ENCODE measurements at regions of chr4 and their contacts with region 1.

Region 1: DNA sequence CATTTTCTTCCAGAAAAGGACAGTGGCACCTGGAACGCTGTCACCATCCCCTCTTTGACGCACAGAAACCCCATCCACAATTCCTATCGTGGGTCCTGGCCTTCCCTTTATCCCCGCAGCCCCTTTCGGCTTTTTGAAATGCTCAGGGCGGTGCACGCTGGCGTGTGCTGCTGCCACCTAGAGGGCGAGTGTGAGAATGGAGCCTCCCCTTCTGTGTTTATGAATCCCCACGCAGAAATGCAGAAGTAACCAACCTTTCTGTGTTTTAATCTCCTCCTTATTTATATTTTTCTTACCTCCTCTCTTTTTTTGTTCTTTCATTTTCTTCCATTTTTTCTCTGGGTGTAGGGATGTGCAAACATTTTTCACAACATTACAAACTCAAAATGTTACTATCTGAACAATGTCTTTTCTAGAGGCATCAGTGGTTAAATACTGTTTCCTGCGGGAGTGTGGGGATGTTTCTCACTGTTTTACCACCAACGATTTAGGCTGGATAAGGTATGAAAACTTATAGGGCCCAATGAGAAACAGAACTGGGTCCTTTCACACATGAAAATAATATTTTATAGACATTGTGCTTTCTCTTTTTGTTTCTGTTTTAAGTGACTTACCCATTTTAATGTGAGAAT is 50.0 kb downstream of the TMA16 start:
- DNase-seq: peak; percentile 59
- ATAC-seq: peak; percentile 93
- H3K4me3 Mint-ChIP-seq: no peak overlapping the region
- H3K27ac Mint-ChIP-seq: no peak overlapping the region
- H3K4me1 Mint-ChIP-seq: peaks cover 30% of the 10 kb centered on the region
- H3K27me3 Mint-ChIP-seq: no peaks in the 10 kb centered on the region
- CTCF ChIP-seq: peak; percentile 58

Region 2: DNA sequence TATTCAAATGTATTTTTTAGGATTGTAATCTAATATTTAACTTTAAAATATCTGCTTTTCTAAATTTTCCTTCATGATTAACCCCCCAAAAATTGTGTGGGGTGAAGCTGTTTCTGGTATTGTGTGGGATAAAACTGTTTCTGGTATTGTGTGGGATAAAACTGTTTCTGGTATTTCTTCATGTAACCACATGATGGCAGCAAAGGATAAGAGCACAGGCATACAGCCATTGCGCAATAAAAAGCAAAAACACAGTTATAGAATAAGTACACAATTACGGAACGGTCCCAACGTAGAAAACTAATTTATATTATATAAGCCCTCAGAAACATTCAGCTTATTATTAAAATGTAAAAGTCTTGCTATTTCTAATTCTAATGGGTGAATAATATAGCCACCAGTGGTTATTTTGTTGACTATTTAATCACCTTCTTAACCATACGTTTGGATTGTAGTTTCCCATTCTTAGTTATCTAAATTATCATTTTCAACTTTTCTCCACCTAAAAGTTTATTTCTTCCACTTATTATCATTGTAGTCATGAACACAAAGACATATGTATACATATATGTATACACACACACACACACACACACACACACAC is 1046.9 kb before region 1 on chr4:
- CTCF ChIA-PET with region 1: interaction called, 5 read pairs
- POLR2A ChIA-PET with region 1: interaction called, 4 read pairs
- intact Hi-C with region 1: loop called (anchors 1 kb)
- DNase-seq: no peak
- ATAC-seq: peak; percentile 50
- H3K4me3 Mint-ChIP-seq: no peak overlapping the region
- H3K27ac Mint-ChIP-seq: no peak overlapping the region
- H3K4me1 Mint-ChIP-seq: no peaks in the 10 kb centered on the region
- H3K27me3 Mint-ChIP-seq: no peaks in the 10 kb centered on the region
- CTCF ChIP-seq: no peak

Region 3: GRCh38 chr4:163166041-163166579 is 378.4 kb before region 1 on chr4:
- CTCF ChIA-PET with region 1: no interaction called
- POLR2A ChIA-PET with region 1: no interaction called
- intact Hi-C with region 1: loop called (anchors 2 kb)
- DNase-seq: peak; percentile 63
- ATAC-seq: peak; percentile 64
- H3K4me3 Mint-ChIP-seq: peak overlapping the region; percentile 91
- H3K27ac Mint-ChIP-seq: peak overlapping the region; percentile 95
- H3K4me1 Mint-ChIP-seq: peaks cover 27% of the 10 kb centered on the region
- H3K27me3 Mint-ChIP-seq: no peaks in the 10 kb centered on the region
- CTCF ChIP-seq: no peak

Region 4: GRCh38 chr4:163180090-163180489 is 364.4 kb before region 1 on chr4:
- CTCF ChIA-PET with region 1: no interaction called
- POLR2A ChIA-PET with region 1: no interaction called
- intact Hi-C with region 1: no loop called
- DNase-seq: no peak
- ATAC-seq: no peak
- H3K4me3 Mint-ChIP-seq: no peak overlapping the region
- H3K27ac Mint-ChIP-seq: no peak overlapping the region
- H3K4me1 Mint-ChIP-seq: no peaks in the 10 kb centered on the region
- H3K27me3 Mint-ChIP-seq: peaks cover 16% of the 10 kb centered on the region
- CTCF ChIP-seq: no peak

Region 5: GRCh38 chr4:163269869-163270268 is 274.7 kb before region 1 on chr4:
- CTCF ChIA-PET with region 1: no interaction called
- POLR2A ChIA-PET with region 1: no interaction called
- intact Hi-C with region 1: no loop called
- DNase-seq: no peak
- ATAC-seq: no peak
- H3K4me3 Mint-ChIP-seq: no peak overlapping the region
- H3K27ac Mint-ChIP-seq: no peak overlapping the region
- H3K4me1 Mint-ChIP-seq: no peaks in the 10 kb centered on the region
- H3K27me3 Mint-ChIP-seq: peaks cover 4% of the 10 kb centered on the region
- CTCF ChIP-seq: no peak

Region 6: DNA sequence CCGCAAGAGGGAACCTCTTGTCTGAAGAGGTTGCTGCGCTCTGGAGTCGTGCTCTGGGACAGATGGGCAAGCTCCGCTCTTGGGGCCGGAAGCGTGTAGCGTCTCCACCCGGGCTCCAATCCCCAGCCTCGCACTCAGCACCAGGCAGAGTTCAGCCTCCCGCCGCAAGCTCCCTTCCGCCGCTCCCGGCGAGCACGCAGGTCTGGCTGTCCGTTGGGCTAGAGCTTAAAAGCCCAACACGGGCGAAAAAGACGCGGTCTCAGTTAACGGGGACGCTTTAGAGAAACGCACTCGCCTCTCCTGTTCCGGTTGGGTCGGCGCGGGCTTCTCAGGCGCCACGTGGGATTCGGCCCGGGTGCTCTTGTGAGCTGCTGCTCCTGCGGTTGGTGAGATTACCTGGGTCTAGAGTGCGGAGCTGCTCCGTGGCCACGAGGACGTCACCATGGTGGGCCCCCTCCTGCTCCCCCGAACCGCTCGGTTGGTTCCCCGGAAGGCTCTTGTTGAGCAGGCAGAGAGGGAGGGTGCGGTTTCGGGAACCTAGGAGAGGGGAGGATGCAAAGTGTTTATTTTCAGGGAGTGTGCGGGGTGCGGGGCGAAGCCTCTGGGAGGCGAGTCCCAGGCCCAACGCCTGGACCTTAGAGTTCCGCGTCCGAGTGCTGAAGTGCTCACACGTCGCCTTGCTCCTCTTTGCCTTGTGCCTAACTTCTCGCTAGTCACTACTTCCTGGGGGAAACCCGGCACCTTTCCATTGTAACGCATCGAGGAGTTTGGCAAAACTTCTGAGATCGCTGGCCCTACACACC is 50.0 kb before region 1 on chr4 and contains the start of gene TMA16:
- CTCF ChIA-PET with region 1: interaction called, 24 read pairs
- POLR2A ChIA-PET with region 1: interaction called, 51 read pairs
- intact Hi-C with region 1: loop called (anchors 2 kb)
- DNase-seq: peak; percentile 75
- ATAC-seq: peak; percentile 66
- H3K4me3 Mint-ChIP-seq: peak within 1 kb of the TSS; percentile 99
- H3K27ac Mint-ChIP-seq: peak within 1 kb of the TSS; percentile 99
- H3K4me1 Mint-ChIP-seq: peaks cover 43% of the 10 kb centered on the region
- H3K27me3 Mint-ChIP-seq: no peaks in the 10 kb centered on the region
- CTCF ChIP-seq: no peak
- total RNA-seq, gene TMA16: 52.5 and 54.1 TPM in 2 replicates

Region 7: DNA sequence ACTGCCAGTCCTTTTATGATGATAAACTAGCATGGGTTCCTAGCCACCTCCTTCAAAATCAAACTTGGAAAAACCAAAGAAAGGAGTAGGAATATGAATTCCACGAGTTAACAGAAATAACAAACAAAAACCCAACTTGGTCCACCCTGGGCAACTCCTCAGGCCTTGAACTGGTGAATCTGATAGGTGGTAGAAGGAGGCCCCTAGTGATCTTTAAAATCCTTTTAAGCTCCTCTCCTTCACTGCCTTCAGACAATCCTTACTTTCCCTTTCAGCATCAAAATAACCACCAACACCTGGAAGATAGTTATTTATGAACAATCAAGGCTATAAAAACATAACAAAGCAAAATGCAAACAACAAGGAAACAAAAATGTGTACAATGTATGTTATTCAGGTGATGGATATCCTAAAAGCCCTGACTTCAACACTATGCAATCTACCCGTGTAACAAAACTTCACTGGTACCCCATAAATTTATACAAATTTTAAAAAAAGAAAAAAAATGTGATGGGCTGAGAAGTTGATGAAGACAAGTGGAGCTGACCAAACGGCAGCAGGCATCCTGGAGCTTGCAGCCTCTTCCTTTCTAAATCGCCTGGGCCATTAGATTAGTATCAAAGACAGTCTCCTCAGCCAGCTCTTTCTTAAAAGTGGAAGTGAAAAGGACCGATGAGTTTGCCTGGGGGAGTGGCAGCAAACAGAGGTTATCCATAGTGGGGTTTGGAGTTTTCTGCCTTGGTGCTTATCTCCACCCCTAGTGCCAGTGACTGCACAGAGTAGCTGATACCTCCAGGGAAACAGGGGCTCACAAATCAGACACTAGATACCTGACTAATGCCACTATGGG is 129.6 kb after region 1 on chr4:
- CTCF ChIA-PET with region 1: interaction called, 767 read pairs
- POLR2A ChIA-PET with region 1: interaction called, 10 read pairs
- intact Hi-C with region 1: no loop called
- DNase-seq: no peak
- ATAC-seq: peak; percentile 89
- H3K4me3 Mint-ChIP-seq: peak overlapping the region; percentile 44
- H3K27ac Mint-ChIP-seq: peak overlapping the region; percentile 88
- H3K4me1 Mint-ChIP-seq: peaks cover 50% of the 10 kb centered on the region
- H3K27me3 Mint-ChIP-seq: no peaks in the 10 kb centered on the region
- CTCF ChIP-seq: no peak

Region 8: GRCh38 chr4:164188216-164188615 is 643.7 kb after region 1 on chr4:
- CTCF ChIA-PET with region 1: no interaction called
- POLR2A ChIA-PET with region 1: no interaction called
- intact Hi-C with region 1: no loop called
- DNase-seq: no peak
- ATAC-seq: no peak
- H3K4me3 Mint-ChIP-seq: no peak overlapping the region
- H3K27ac Mint-ChIP-seq: no peak overlapping the region
- H3K4me1 Mint-ChIP-seq: no peaks in the 10 kb centered on the region
- H3K27me3 Mint-ChIP-seq: no peaks in the 10 kb centered on the region
- CTCF ChIP-seq: no peak

Region 9: GRCh38 chr4:164731827-164732474 is 1187.4 kb after region 1 on chr4:
- CTCF ChIA-PET with region 1: interaction called, 30 read pairs
- POLR2A ChIA-PET with region 1: no interaction called
- intact Hi-C with region 1: no loop called
- DNase-seq: peak; percentile 15
- ATAC-seq: peak; percentile 54
- H3K4me3 Mint-ChIP-seq: no peak overlapping the region
- H3K27ac Mint-ChIP-seq: no peak overlapping the region
- H3K4me1 Mint-ChIP-seq: no peaks in the 10 kb centered on the region
- H3K27me3 Mint-ChIP-seq: no peaks in the 10 kb centered on the region
- CTCF ChIP-seq: peak; percentile 89

Measured in activated B cell treated with CpG ODN at 0.5 μM for 24 hours (primary cell).